Caco-2 (cell line): ENCODE measurements at regions of chr13 and their contacts with region 1.

Region 1: GRCh38 chr13:42078128-42078808 is 29.8 kb downstream of the DGKH start:
- DNase-seq: peak in 1 of 2 experiments; percentile 19
- H3K4me3 ChIP-seq: no peak overlapping the region
- H3K4me3 Mint-ChIP-seq: no peak overlapping the region
- H3K27ac Mint-ChIP-seq: no peak overlapping the region
- H3K4me1 ChIP-seq: no peaks in the 10 kb centered on the region
- H3K4me1 Mint-ChIP-seq: no peaks in the 10 kb centered on the region
- H3K27me3 ChIP-seq: no peaks in the 10 kb centered on the region
- H3K27me3 Mint-ChIP-seq: peaks cover 3% of the 10 kb centered on the region
- CTCF ChIP-seq: no peak

Region 2: GRCh38 chr13:42028113-42028799 is 50.0 kb before region 1 on chr13:
- CTCF ChIA-PET with region 1: no interaction called
- POLR2A ChIA-PET with region 1: no interaction called
- intact Hi-C with region 1: no loop called
- DNase-seq: peak; percentile 71 to 74
- H3K4me3 ChIP-seq: no peak overlapping the region
- H3K4me3 Mint-ChIP-seq: peak overlapping the region; percentile 8
- H3K27ac Mint-ChIP-seq: peak overlapping the region; percentile 70
- H3K4me1 ChIP-seq: peaks cover 19% of the 10 kb centered on the region
- H3K4me1 Mint-ChIP-seq: peaks cover 18% of the 10 kb centered on the region
- H3K27me3 ChIP-seq: no peaks in the 10 kb centered on the region
- H3K27me3 Mint-ChIP-seq: no peaks in the 10 kb centered on the region
- CTCF ChIP-seq: no peak

Region 3: GRCh38 chr13:42048682-42049453 is 29.4 kb before region 1 on chr13:
- CTCF ChIA-PET with region 1: no interaction called
- POLR2A ChIA-PET with region 1: no interaction called
- intact Hi-C with region 1: no loop called
- DNase-seq: peak; percentile 86 to 87
- H3K4me3 ChIP-seq: peak overlapping the region; percentile 87
- H3K4me3 Mint-ChIP-seq: peak overlapping the region; percentile 96
- H3K27ac Mint-ChIP-seq: no peak overlapping the region
- H3K4me1 ChIP-seq: peaks cover 13% of the 10 kb centered on the region
- H3K4me1 Mint-ChIP-seq: peaks cover 6% of the 10 kb centered on the region
- H3K27me3 ChIP-seq: no peaks in the 10 kb centered on the region
- H3K27me3 Mint-ChIP-seq: peaks cover 16% of the 10 kb centered on the region
- CTCF ChIP-seq: no peak

Region 4: DNA sequence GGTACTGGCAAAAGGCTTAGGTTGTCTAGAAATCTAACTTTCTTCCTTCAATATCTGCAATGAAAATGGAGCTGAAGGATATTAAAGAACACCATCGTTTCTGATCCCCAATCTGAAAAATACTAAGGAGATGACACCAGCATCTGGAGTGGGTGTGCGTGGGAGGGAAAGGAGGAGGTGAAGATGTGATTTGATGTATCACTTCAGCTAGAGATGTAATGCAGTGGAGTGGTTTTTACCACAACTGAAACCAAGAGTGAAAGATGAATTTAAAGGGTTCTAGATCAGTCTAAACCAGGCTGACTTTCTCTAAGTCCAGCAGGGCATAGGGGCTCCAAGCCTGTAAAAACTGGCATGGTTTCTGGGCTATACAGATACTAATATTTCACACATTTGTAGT is 342.0 kb after region 1 on chr13:
- CTCF ChIA-PET with region 1: no interaction called
- POLR2A ChIA-PET with region 1: no interaction called
- intact Hi-C with region 1: no loop called
- DNase-seq: no peak
- H3K4me3 ChIP-seq: no peak overlapping the region
- H3K4me3 Mint-ChIP-seq: no peak overlapping the region
- H3K27ac Mint-ChIP-seq: no peak overlapping the region
- H3K4me1 ChIP-seq: 0 out of 2 replicates have a peak, but pooled peaks cover 6% of the 10 kb centered on the region
- H3K4me1 Mint-ChIP-seq: no peaks in the 10 kb centered on the region
- H3K27me3 ChIP-seq: no peaks in the 10 kb centered on the region
- H3K27me3 Mint-ChIP-seq: peaks cover 14% of the 10 kb centered on the region
- CTCF ChIP-seq: no peak

Region 5: DNA sequence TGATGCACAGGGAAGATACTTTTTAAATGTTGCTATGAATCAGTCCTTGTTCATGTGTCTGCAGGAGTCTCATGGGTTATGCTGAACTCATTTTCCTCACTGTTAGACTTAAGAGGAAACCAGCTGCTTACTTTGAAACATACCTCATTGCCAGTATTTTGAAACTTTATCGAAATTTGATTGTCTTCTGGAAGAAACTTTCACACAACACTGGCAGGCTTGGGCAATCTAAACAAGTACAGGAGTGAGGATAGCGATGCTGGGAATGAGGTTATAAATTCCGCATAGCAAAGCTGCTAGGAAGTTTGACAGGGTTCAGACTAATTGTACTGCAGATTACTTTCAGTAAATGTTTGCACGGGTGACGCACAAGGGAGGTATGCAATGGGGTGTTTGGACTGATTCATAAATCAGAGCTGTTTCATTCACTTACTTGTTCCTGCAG is 1190.8 kb after region 1 on chr13:
- CTCF ChIA-PET with region 1: interaction called, 10 read pairs
- POLR2A ChIA-PET with region 1: no interaction called
- intact Hi-C with region 1: no loop called
- DNase-seq: peak; percentile 86 to 90
- H3K4me3 ChIP-seq: no peak overlapping the region
- H3K4me3 Mint-ChIP-seq: peak overlapping the region; percentile 42
- H3K27ac Mint-ChIP-seq: peak overlapping the region; percentile 67
- H3K4me1 ChIP-seq: peaks cover 36% of the 10 kb centered on the region
- H3K4me1 Mint-ChIP-seq: peaks cover 29% of the 10 kb centered on the region
- H3K27me3 ChIP-seq: no peaks in the 10 kb centered on the region
- H3K27me3 Mint-ChIP-seq: no peaks in the 10 kb centered on the region
- CTCF ChIP-seq: no peak